ENCODE measurements at regions of chr2 and their contacts with region 1.

Region 1: GRCh38 chr2:166361351-166362153 is 14.2 kb downstream of the SCN9A start:
- DNase-seq: peak; percentile 26
- ATAC-seq: peak; percentile 75
- H3K4me3 ChIP-seq: no peak overlapping the region
- H3K27ac ChIP-seq: no peak overlapping the region
- H3K4me1 ChIP-seq: no peaks in the 10 kb centered on the region
- H3K27me3 ChIP-seq: peaks cover 13% of the 10 kb centered on the region; the same call in 1 of the 2 replicates
- CTCF ChIP-seq: peak; percentile 46 to 63 (median 62)
- POLR2A ChIP-seq: no peak
- RAD21 ChIP-seq: peak; percentile 53

Region 2: DNA sequence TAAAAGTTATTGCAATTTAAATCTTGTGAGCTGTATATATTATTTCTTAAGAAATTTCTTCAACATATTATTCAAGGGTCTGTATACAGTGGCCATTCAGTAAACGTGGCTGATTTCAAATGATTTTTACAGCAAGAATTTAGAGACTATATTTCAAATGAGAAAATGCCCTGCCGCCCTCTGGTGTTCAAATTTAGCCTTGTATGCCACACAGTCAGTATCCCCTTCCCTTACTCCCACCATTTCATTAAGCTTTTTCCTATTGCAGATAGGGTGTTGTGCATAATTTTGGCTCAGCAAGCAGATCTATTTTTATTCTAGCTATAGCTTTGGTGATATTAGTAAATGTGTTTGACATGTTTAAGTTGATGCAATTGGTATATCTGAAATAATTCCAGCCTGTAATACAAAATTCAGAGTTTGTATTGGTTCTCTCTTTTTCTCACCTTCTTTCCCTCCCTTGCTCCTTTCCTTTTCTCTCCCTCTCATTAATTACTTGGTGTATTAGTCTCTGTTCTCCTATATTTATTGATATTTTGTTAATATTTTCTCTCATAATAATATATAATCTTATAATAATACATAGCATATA is 155.3 kb after region 1 on chr2:
- CTCF ChIA-PET with region 1: no interaction called
- POLR2A ChIA-PET with region 1: no interaction called
- RAD21 ChIA-PET with region 1: no interaction called
- intact Hi-C with region 1: loop called (anchors 5 kb)
- DNase-seq: no peak
- ATAC-seq: peak; percentile 63; the same call in 1 of the 2 replicates
- H3K4me3 ChIP-seq: no peak overlapping the region
- H3K27ac ChIP-seq: no peak overlapping the region
- H3K4me1 ChIP-seq: no peaks in the 10 kb centered on the region
- H3K27me3 ChIP-seq: peaks cover 8% of the 10 kb centered on the region; the same call in 1 of the 2 replicates
- CTCF ChIP-seq: peak; percentile 19 to 54 (median 52); a peak in 5 of 6 replicates
- POLR2A ChIP-seq: no peak
- RAD21 ChIP-seq: peak; percentile 46